ENCODE measurements at regions of chr11 and their contacts with region 1.

Region 1: GRCh38 chr11:62591448-62592145 is at the start of gene TUT1:
- DNase-seq: peak; percentile 91 to 98 (median 97)
- H3K4me3 ChIP-seq: peak within 1 kb of the TSS; percentile 83
- H3K4me3 Mint-ChIP-seq: peak within 1 kb of the TSS; percentile 84 to 98 (median 95)
- H3K27ac ChIP-seq: peak within 1 kb of the TSS; percentile 92
- H3K27ac Mint-ChIP-seq: peak within 1 kb of the TSS; percentile 84 to 99 (median 98)
- H3K4me1 ChIP-seq: peaks cover 41% of the 10 kb centered on the region
- H3K4me1 Mint-ChIP-seq: peaks cover 36 to 71% (median 59%) of the 10 kb centered on the region in 3 donors
- H3K27me3 ChIP-seq: no peaks in the 10 kb centered on the region
- H3K27me3 Mint-ChIP-seq: peaks cover 0 to 3% of the 10 kb centered on the region in 2 donors
- total RNA-seq, gene TUT1: 30.8 to 32.7 TPM

Region 2: DNA sequence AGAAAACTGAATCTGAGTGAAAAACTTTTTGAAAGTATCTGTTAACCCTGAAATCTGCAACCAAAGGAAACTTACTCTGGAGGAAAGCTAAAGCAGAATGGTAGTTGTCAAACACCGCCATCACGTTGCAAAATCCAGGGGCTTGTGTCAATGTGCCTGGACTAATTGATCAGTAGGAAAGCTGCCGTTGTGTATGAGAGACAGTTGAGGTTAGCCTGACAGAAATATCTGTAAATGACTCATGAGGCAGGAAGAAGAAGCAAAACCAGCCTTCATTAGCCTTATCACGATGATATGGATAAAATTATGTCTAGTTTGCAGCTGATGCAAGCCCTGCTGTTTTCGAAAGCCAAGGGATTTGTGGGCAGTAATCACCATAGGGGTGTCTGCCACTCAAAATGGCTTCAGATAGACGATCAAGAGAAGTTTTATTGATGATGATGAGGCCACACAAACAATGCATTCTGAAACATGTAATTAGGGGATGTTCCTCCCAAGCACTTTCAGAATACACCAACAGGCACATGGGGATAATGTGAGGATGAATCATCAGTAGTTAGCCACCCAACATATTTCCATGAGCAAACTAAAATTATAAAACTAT is 163.9 kb before region 1 on chr11:
- CTCF ChIA-PET with region 1: interaction called, 31 read pairs
- POLR2A ChIA-PET with region 1: interaction called, 7 read pairs
- DNase-seq: peak in 1 of 5 donors; percentile 8
- H3K4me3 ChIP-seq: no peak overlapping the region
- H3K4me3 Mint-ChIP-seq: peak overlapping the region in 6 of 7 donors; percentile 2 to 81 (median 17)
- H3K27ac ChIP-seq: peak overlapping the region; percentile 10
- H3K27ac Mint-ChIP-seq: peak overlapping the region; percentile 52 to 97 (median 76)
- H3K4me1 ChIP-seq: peaks cover 21% of the 10 kb centered on the region
- H3K4me1 Mint-ChIP-seq: peaks cover 50 to 56% (median 50%) of the 10 kb centered on the region in 3 donors
- H3K27me3 ChIP-seq: no peaks in the 10 kb centered on the region
- H3K27me3 Mint-ChIP-seq: no peaks in the 10 kb centered on the region

Region 3: GRCh38 chr11:62535802-62536201 is 55.8 kb before region 1 on chr11:
- CTCF ChIA-PET with region 1: no interaction called
- POLR2A ChIA-PET with region 1: no interaction called
- DNase-seq: no peak
- H3K4me3 ChIP-seq: no peak overlapping the region
- H3K4me3 Mint-ChIP-seq: peak overlapping the region in 1 of 7 donors; percentile 84
- H3K27ac ChIP-seq: no peak overlapping the region
- H3K27ac Mint-ChIP-seq: peak overlapping the region in 3 of 8 donors; percentile 65 to 100 (median 86)
- H3K4me1 ChIP-seq: peaks cover 29% of the 10 kb centered on the region
- H3K4me1 Mint-ChIP-seq: peaks cover 47 to 77% (median 64%) of the 10 kb centered on the region in 3 donors
- H3K27me3 ChIP-seq: no peaks in the 10 kb centered on the region
- H3K27me3 Mint-ChIP-seq: peaks cover 0 to 2% of the 10 kb centered on the region in 2 donors

Region 4: DNA sequence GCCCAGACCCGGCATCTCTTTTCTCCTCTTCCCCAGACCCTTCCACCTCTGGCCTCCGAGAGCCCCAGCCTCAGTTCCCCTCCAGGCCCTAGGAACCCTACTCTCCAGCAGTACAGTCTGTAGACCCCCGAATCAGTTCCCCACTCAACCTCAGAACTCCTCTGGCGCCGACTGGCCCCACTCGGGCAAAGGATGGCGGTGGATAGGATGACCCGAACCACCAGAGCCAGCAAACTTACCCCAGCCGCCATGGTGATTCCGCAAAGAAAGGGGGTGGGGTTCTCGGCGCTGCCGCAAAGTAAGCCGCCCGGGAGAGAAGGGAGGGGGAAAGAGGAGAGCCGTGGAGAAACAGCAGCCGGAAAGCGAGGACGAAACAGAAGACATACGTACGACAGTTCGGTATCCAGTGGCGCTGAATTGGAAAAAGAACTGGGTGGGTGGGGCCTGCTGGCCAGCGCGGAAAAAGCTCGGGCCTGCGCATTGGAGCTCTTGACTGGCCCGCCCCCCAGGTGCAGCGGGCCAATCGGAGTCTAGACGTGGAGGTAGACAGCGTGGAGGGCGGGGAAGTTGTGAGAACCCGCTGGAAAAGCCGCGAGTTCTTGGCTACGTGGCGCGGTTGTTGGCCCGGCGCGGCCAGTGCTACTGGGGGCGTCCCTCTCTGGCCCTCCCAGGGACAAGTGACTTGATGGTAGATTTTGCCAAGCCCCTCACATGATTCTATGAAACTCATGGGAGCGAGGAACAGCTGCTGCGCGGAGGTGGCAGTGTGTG is 17.8 kb before region 1 on chr11 and contains the start of gene EEF1G:
- CTCF ChIA-PET with region 1: interaction called, 17 read pairs
- POLR2A ChIA-PET with region 1: interaction called, 49 read pairs
- DNase-seq: peak; percentile 96 to 100 (median 99)
- H3K4me3 ChIP-seq: peak within 1 kb of the TSS; percentile 94
- H3K4me3 Mint-ChIP-seq: peak within 1 kb of the TSS; percentile 90 to 98 (median 96)
- H3K27ac ChIP-seq: peak within 1 kb of the TSS; percentile 93
- H3K27ac Mint-ChIP-seq: peak within 1 kb of the TSS; percentile 90 to 97 (median 95)
- H3K4me1 ChIP-seq: peaks cover 24% of the 10 kb centered on the region
- H3K4me1 Mint-ChIP-seq: peaks cover 46 to 59% (median 52%) of the 10 kb centered on the region in 3 donors
- H3K27me3 ChIP-seq: no peaks in the 10 kb centered on the region
- H3K27me3 Mint-ChIP-seq: no peaks in the 10 kb centered on the region
- total RNA-seq, gene EEF1G: 1,800 to 1,846 TPM

Region 5: DNA sequence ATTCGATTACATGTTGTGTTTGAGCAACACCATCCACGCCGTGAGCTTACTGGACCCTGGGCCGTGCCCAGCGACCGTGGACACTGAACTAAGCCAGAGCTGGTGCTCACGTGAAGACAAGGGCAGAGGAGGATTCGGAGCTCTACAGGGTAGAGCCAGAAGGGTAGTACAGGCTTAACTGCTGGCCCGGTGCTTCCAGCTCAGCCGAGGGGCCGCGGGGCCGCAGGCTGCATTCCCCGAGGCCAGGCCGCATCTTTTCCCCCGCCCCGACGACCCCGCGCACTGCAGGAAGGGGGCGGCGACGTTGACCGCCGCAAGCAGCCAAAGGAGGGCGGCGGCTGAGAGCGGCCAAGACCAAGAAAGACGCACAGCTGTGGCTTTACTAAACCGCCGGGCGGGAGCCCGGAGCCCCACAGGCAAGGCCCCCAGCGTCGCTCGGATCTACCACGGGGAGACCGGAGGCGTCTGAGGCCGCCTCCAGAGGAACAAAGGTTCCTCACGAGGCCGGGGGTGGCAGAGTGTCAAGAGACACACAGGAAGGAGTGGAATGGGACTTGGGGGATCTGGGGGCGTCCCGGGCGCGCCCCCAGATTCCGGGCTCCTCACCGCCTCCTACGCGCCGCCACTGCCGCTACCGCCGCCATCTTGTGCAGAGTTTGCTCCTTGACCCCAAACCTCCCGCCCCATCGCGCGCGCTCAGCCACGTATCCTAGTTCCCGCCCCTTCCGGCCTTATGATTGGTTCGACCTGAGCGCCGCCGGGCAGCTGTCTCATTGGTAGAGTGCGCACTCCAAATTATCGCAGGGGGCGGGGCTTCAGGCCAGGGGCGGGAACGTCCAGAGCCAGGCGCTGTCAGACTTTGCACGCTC is 54.6 kb after region 1 on chr11 and contains the start of gene GANAB:
- CTCF ChIA-PET with region 1: interaction called, 11 read pairs
- POLR2A ChIA-PET with region 1: interaction called, 16 read pairs
- DNase-seq: peak; percentile 96 to 99 (median 98)
- H3K4me3 ChIP-seq: peak within 1 kb of the TSS; percentile 75
- H3K4me3 Mint-ChIP-seq: peak within 1 kb of the TSS; percentile 89 to 97 (median 96)
- H3K27ac ChIP-seq: peak within 1 kb of the TSS; percentile 77
- H3K27ac Mint-ChIP-seq: peak within 1 kb of the TSS; percentile 88 to 99 (median 98)
- H3K4me1 ChIP-seq: peaks cover 24% of the 10 kb centered on the region
- H3K4me1 Mint-ChIP-seq: peaks cover 19 to 40% (median 25%) of the 10 kb centered on the region in 3 donors
- H3K27me3 ChIP-seq: no peaks in the 10 kb centered on the region
- H3K27me3 Mint-ChIP-seq: no peaks in the 10 kb centered on the region
- total RNA-seq, gene GANAB: 213 to 219 TPM

Region 6: DNA sequence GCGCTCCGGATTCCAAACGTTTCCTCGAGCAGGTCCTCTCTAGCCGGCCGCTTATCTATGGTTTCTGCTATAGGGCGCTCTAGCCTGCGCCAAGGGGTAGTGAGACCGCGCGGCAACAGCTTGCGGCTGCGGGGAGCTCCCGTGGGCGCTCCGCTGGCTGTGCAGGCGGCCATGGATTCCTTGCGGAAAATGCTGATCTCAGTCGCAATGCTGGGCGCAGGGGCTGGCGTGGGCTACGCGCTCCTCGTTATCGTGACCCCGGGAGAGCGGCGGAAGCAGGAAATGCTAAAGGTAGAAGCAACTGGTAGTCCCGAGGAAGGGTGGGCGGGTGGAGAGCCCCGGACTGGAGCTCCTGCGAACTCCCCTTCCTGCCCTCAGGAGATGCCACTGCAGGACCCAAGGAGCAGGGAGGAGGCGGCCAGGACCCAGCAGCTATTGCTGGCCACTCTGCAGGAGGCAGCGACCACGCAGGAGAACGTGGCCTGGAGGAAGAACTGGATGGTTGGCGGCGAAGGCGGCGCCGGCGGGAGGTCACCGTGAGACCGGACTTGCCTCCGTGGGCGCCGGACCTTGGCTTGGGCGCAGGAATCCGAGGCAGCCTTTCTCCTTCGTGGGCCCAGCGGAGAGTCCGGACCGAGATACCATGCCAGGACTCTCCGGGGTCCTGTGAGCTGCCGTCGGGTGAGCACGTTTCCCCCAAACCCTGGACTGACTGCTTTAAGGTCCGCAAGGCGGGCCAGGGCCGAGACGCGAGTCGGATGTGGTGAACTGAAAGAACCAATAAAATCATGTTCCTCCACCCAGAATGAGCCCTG is 80.2 kb after region 1 on chr11 and contains the starts of genes LBHD1 and UQCC3:
- CTCF ChIA-PET with region 1: interaction called, 9 read pairs
- POLR2A ChIA-PET with region 1: interaction called, 56 read pairs
- DNase-seq: peak; percentile 56 to 85 (median 79)
- H3K4me3 ChIP-seq: peak within 1 kb of the TSS; percentile 82
- H3K4me3 Mint-ChIP-seq: peak within 1 kb of the TSS; percentile 94 to 100 (median 100)
- H3K27ac ChIP-seq: peak within 1 kb of the TSS; percentile 91
- H3K27ac Mint-ChIP-seq: peak within 1 kb of the TSS; percentile 83 to 98 (median 97)
- H3K4me1 ChIP-seq: peaks cover 36% of the 10 kb centered on the region
- H3K4me1 Mint-ChIP-seq: peaks cover 36 to 61% (median 52%) of the 10 kb centered on the region in 3 donors
- H3K27me3 ChIP-seq: no peaks in the 10 kb centered on the region
- H3K27me3 Mint-ChIP-seq: no peaks in the 10 kb centered on the region
- total RNA-seq, gene LBHD1: 22.6 to 22.9 TPM
- total RNA-seq, gene UQCC3: 7.1 to 7.5 TPM

Region 7: GRCh38 chr11:62726915-62727763 is 135.5 kb after region 1 on chr11 and contains the start of gene HNRNPUL2:
- CTCF ChIA-PET with region 1: interaction called, 3 read pairs
- POLR2A ChIA-PET with region 1: interaction called, 19 read pairs
- DNase-seq: peak; percentile 98 to 99 (median 99)
- H3K4me3 ChIP-seq: peak within 1 kb of the TSS; percentile 99
- H3K4me3 Mint-ChIP-seq: peak within 1 kb of the TSS; percentile 92 to 99 (median 98)
- H3K27ac ChIP-seq: peak within 1 kb of the TSS; percentile 90
- H3K27ac Mint-ChIP-seq: peak within 1 kb of the TSS; percentile 95 to 99 (median 98)
- H3K4me1 ChIP-seq: peaks cover 43% of the 10 kb centered on the region
- H3K4me1 Mint-ChIP-seq: peaks cover 55 to 64% (median 63%) of the 10 kb centered on the region in 3 donors
- H3K27me3 ChIP-seq: no peaks in the 10 kb centered on the region
- H3K27me3 Mint-ChIP-seq: peaks cover 0 to 3% of the 10 kb centered on the region in 2 donors
- total RNA-seq, gene HNRNPUL2: 58.7 to 64.3 TPM

Region 8: DNA sequence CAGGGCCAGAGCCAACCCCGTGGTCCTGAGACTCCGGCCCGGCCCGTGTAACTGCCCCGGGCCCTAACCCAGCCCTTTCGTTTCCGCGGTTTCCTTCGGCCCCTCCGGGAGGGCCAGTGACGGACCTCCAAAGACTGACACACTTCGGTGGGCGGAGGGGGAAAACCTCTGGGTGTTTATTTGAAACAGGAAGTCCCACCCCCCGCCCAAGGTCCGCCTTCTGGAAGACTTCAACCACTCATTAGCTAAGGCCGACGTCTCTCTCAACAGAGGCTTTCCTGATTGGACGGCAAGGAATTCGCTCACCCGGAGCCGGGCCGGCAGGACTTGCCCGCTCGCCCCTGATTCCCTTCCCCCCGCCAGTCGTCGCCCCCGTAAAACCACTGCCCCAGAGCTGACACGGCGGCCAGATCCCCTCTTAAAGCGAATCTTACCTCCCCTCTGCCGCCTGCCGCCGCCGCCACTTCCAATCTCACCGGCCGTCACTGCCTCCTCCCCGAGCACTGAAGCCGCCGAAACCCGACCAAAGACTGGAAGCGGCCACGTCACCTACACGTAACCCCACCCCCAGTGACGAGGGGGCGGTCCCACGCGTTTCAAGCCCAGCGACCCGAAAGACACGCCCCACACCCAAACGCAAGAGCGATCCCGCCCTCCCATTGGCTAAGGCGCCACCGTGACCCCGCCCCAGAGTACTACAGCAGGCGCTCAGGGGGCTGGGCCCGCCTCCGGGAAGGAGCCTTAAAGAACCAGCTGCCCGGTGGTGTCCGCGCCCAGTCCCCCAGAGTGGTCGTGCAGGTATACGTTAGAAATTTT is 240.1 kb after region 1 on chr11 and contains the start of gene STX5:
- CTCF ChIA-PET with region 1: no interaction called
- POLR2A ChIA-PET with region 1: interaction called, 20 read pairs
- DNase-seq: peak; percentile 99 to 100 (median 99)
- H3K4me3 ChIP-seq: peak within 1 kb of the TSS; percentile 96
- H3K4me3 Mint-ChIP-seq: peak within 1 kb of the TSS; percentile 93 to 100 (median 97)
- H3K27ac ChIP-seq: peak within 1 kb of the TSS; percentile 98
- H3K27ac Mint-ChIP-seq: peak within 1 kb of the TSS; percentile 96 to 100 (median 98)
- H3K4me1 ChIP-seq: peaks cover 29% of the 10 kb centered on the region
- H3K4me1 Mint-ChIP-seq: peaks cover 22 to 55% (median 35%) of the 10 kb centered on the region in 3 donors
- H3K27me3 ChIP-seq: no peaks in the 10 kb centered on the region
- H3K27me3 Mint-ChIP-seq: no peaks in the 10 kb centered on the region
- total RNA-seq, gene STX5: 34.7 to 35.3 TPM